GM13977 (cell line): ENCODE measurements at regions of chr4 and their contacts with region 1.

Region 1: GRCh38 chr4:1740021-1740545 is 18.8 kb downstream of the TACC3 start:
- DNase-seq: no peak
- CTCF ChIP-seq: no peak

Region 2: GRCh38 chr4:1579901-1580691 is 160.0 kb before region 1 on chr4:
- in situ Hi-C with region 1: no loop called
- DNase-seq: peak; percentile 95
- CTCF ChIP-seq: no peak

Region 3: GRCh38 chr4:1809754-1810511 is 69.8 kb after region 1 on chr4:
- in situ Hi-C with region 1: loop called (anchors 5 kb)
- DNase-seq: peak; percentile 92
- CTCF ChIP-seq: peak; percentile 97

Region 4: DNA sequence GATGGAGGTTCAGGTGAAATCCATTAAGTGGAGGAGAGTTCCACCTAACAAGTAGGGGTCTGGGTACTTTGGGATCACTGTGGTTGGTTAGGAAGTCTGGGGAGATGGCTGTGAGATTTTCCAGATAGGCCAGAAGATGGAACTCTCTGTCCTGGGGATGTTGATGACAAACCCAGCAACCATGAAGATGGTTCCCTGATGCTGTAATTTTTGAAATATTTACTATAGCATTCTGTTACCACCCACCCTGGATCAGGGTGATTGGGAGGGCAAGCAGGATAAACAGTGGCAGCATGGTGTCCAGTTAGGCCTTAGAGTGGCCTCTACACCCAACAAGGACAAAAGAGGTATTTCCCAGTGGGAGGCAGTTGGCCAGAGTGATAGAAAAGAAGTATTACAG is 284.6 kb after region 1 on chr4:
- in situ Hi-C with region 1: no loop called
- DNase-seq: no peak
- CTCF ChIP-seq: no peak

Region 5: DNA sequence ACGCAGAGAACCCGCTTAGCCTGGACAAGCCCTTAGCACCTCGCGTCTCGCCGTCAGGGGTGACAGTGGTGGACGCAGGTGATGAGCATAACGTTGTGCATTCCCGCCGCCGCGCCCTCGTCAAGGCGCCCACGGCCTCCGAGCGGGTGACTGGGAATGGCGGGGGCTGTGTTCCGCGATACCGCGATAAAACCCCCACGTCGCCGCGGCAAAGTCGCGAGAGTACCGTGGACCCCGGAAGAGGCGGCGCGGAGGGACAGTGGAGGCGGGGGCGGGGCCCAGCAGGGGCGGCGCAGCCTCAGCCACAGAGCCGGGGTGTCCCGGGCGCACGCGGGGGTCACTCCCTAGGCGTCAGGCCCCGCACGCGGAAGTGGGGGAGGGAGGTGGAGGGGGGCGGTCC is 624.6 kb after region 1 on chr4:
- in situ Hi-C with region 1: no loop called
- DNase-seq: peak; percentile 59
- CTCF ChIP-seq: no peak